ENCODE measurements at regions of chr2 and their contacts with region 1.

Region 1: GRCh38 chr2:127857265-127857808 is 618 bp downstream of the POLR2D start:
- DNase-seq: peak; percentile 39
- ATAC-seq: no peak
- H3K4me3 Mint-ChIP-seq: peak overlapping the region; percentile 97
- H3K27ac Mint-ChIP-seq: peak overlapping the region; percentile 96
- H3K4me1 Mint-ChIP-seq: peaks cover 50% of the 10 kb centered on the region
- H3K27me3 Mint-ChIP-seq: no peaks in the 10 kb centered on the region

Region 2: GRCh38 chr2:127818794-127819425 is 38.4 kb before region 1 on chr2:
- CTCF ChIA-PET with region 1: no interaction called
- POLR2A ChIA-PET with region 1: no interaction called
- intact Hi-C with region 1: no loop called
- DNase-seq: no peak
- ATAC-seq: no peak
- H3K4me3 Mint-ChIP-seq: no peak overlapping the region
- H3K27ac Mint-ChIP-seq: no peak overlapping the region
- H3K4me1 Mint-ChIP-seq: no peaks in the 10 kb centered on the region
- H3K27me3 Mint-ChIP-seq: peaks cover 11% of the 10 kb centered on the region

Region 3: GRCh38 chr2:127829845-127830246 is 27.5 kb before region 1 on chr2:
- CTCF ChIA-PET with region 1: interaction called, 4 read pairs
- POLR2A ChIA-PET with region 1: no interaction called
- intact Hi-C with region 1: loop called in 1 of 2 experiments (anchors 1 kb)
- DNase-seq: peak; percentile 83
- ATAC-seq: peak; percentile 97
- H3K4me3 Mint-ChIP-seq: no peak overlapping the region
- H3K27ac Mint-ChIP-seq: peak overlapping the region; percentile 78
- H3K4me1 Mint-ChIP-seq: peaks cover 27% of the 10 kb centered on the region
- H3K27me3 Mint-ChIP-seq: no peaks in the 10 kb centered on the region

Region 4: GRCh38 chr2:127884436-127885345 is 27.4 kb after region 1 on chr2:
- CTCF ChIA-PET with region 1: interaction called, 5 read pairs
- POLR2A ChIA-PET with region 1: no interaction called
- intact Hi-C with region 1: loop called in 1 of 2 experiments (anchors 1 kb)
- DNase-seq: no peak
- ATAC-seq: no peak
- H3K4me3 Mint-ChIP-seq: peak overlapping the region; percentile 88
- H3K27ac Mint-ChIP-seq: peak overlapping the region; percentile 85
- H3K4me1 Mint-ChIP-seq: peaks cover 57% of the 10 kb centered on the region
- H3K27me3 Mint-ChIP-seq: no peaks in the 10 kb centered on the region

Region 5: DNA sequence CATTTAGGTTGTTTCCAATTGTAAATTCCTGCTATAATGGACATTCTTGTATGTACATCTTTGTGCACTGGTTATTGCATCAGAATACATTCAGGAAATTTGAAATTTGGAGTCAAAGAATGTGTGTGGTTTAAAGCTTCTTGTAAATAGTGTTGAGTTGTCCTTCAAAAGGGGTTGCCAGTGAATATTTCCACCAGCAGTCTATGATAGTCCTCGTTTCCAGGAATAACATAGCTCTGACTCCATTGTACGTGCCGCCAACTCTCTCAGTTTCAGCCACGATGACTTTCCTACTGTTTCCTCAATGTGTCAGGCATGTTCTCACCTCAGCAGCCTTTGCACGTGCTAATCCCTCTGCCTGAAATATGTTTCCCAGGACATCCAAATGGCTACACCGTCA is 472.3 kb after region 1 on chr2:
- CTCF ChIA-PET with region 1: no interaction called
- POLR2A ChIA-PET with region 1: no interaction called
- intact Hi-C with region 1: no loop called
- DNase-seq: peak; percentile 57
- ATAC-seq: peak; percentile 80
- H3K4me3 Mint-ChIP-seq: no peak overlapping the region
- H3K27ac Mint-ChIP-seq: peak overlapping the region; percentile 51
- H3K4me1 Mint-ChIP-seq: peaks cover 10% of the 10 kb centered on the region
- H3K27me3 Mint-ChIP-seq: peaks cover 14% of the 10 kb centered on the region